Left lung (tissue), 14 donors: ENCODE measurements at regions of chr17 and their contacts with region 1.

Region 1: DNA sequence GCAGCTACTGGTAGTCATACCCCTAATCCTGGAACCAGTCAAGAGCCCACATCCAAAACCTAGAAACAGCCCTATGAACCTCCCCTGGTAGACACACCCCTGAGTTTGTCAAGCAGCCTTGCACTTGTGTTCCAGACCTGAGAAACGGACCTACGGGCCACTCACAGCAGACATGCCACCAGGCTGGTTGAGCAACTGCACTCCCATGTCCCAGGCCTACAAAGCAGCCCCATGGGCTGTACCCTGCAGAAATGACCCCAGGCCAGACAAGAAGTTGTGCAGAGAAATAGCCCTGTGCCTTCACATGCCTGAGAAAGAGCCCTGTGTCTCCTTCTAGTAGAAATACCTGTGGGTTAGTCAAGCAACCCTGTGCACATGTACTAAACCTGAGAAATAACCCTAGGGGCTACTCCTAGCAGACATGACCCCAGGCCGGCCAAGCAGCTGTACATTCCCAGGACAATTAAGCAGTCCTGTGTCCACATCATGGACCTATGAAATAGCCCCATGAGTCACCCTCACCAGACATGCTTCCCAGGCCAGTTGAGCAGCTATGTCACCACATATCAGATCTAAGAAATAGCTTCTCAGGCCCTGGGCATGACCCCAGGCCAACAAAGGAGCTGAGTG is 519.6 kb upstream of the CA10 start:
- DNase-seq: no peak
- ATAC-seq: no peak
- H3K4me3 ChIP-seq: no peak overlapping the region
- H3K27ac ChIP-seq: no peak overlapping the region
- H3K4me1 ChIP-seq: no peaks in the 10 kb centered on the region
- H3K27me3 ChIP-seq: no peaks in the 10 kb centered on the region
- CTCF ChIP-seq: no peak

Region 2: DNA sequence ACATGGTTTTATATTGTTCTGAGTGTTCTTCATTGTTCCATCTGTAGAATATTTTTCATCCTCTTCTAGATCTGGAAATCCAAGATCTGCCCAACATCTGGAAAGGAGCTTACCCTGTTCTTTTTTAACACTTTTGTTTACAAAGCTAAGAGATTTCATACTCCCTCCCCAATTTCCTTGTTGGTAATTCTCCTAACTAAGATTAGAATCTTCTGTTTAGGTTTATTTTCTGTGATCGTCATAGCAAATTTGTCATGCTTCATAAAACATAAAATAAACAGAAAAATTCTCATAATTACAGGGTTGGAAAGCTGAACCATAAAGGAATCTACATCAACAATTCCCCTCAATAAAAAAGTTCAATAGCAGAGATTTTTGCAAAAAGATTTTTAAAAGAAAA is 60.7 kb after region 1 on chr17:
- intact Hi-C with region 1: loop called in 1 of 2 experiments (anchors 10 kb)
- DNase-seq: no peak
- ATAC-seq: no peak
- H3K4me3 ChIP-seq: no peak overlapping the region
- H3K27ac ChIP-seq: no peak overlapping the region
- H3K4me1 ChIP-seq: no peaks in the 10 kb centered on the region
- H3K27me3 ChIP-seq: no peaks in the 10 kb centered on the region
- CTCF ChIP-seq: no peak